AG04450 (cell line): ENCODE measurements at regions of chr14 and their contacts with region 1.

Region 1: DNA sequence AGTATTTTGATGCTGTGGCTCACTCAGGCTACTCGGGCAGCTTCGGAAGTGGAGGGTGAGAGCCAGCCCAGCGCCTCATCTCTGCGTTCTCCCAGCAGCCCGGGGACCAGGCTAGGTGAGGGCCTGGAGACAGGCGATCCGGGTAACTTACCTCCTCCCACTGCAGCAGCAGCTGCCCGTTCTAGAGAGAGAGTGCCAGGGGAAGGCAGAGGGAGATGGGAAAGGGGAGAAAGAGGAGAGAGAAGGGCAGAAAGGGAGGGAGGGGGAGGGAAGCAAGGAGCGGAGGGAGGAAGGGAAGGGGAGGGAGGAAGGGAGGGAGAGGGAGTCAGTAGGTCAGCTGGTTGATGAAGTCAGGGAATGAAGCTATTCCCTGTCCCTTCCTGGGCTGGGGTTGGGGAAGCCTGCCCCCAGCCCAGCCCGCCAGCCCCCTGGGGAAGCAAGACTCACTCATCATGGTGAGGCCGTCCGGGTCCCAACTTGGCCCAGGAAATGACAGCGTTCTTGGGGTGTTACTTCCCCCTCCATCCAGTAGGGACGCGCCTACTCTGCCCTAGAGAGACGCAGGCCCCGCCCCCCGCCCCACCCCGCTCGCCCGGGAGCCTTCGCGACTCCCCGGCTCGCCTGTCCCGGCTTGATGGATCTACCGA is at the start of gene IFI27L2:
- DNase-seq: peak; percentile 24
- H3K4me3 ChIP-seq: peak within 1 kb of the TSS; percentile 72
- H3K27ac ChIP-seq: peak within 1 kb of the TSS; percentile 54
- H3K27me3 ChIP-seq: peaks cover 3% of the 10 kb centered on the region
- CTCF ChIP-seq: peak; percentile 40
- polyA plus RNA-seq, gene IFI27L2: 81.9 and 122 TPM in 2 replicates

Region 2: GRCh38 chr14:94041551-94042346 is 87.5 kb before region 1 on chr14:
- CTCF ChIA-PET with region 1: interaction called, 183 read pairs
- POLR2A ChIA-PET with region 1: no interaction called
- DNase-seq: peak; percentile 46
- H3K4me3 ChIP-seq: no peak overlapping the region
- H3K27ac ChIP-seq: no peak overlapping the region
- H3K27me3 ChIP-seq: no peaks in the 10 kb centered on the region
- CTCF ChIP-seq: no peak

Region 3: DNA sequence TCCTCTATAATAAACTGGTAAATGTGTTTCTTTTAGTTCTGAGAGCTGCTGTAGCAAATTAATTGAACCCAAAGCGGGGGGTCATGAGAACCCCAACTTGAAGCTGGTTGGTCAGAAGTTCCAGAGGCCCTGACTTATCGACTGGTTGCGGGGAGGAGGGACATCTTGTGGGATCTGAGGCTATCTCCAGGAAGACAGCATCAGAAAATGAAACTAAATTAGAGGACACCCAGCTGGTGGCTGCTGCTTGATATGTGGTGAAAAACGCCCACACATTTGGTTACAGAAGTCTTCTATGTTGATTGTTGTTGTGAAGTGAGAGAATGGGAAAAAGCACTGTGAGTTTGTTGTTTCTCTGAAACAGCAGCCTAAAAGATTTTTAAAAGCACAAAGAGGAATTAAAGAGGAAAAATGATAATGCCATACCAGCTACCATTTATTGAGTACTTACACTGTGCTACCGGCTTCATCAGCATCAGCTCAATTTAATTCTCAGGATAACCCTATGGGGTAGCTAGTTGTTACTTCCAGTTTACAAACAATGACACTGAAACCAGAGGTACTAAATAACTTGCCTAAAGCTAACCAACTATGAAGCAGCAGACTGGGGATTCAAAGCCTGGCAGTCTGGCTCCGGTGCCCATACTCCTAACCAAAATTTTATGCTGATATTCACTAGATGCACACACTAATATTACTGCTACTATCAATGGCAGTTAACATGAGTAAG is 72.5 kb before region 1 on chr14:
- CTCF ChIA-PET with region 1: interaction called, 26 read pairs
- POLR2A ChIA-PET with region 1: interaction called, 8 read pairs
- DNase-seq: no peak
- H3K4me3 ChIP-seq: no peak overlapping the region
- H3K27ac ChIP-seq: no peak overlapping the region
- H3K27me3 ChIP-seq: no peaks in the 10 kb centered on the region
- CTCF ChIP-seq: no peak

Region 4: DNA sequence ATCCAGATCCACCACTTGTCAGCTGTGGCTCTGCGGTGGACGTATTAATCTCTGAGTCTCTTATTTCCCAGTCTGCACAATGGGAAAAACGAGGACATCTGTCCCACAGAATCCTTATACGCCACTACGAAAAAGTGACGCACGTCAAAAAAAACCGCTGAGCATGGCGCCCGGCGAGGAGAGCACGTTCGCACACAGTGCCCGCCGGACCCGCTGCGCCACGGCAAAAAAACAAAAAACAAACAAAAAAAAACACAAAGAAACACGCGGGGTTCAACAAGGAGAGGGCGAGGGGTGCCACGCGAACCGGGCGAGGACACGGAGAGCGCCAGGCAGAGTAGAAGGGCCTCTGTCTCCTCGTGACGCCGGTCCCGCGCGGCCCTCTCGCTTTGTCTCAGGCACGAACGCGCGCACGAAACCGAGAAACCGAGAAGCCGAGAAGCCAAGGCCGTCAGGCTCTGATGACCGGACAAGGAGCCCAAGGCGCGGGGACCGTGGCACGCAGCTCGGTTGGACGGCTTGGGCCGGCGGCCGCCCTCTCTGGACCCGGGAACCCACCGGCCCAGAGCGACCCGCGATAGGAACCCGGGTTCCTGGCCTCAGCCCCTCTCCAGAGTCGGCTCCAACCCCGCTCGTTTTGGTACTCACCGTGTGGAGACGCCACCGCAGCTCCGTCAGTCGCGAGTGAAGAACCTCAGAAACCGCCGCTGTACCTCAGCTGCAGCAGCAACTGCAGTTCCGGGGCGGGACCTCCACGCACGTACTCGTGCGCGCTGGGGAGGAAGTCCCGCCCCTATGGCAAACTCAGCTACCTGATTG is 48.6 kb before region 1 on chr14 and contains the start of gene DDX24:
- CTCF ChIA-PET with region 1: interaction called, 64 read pairs
- POLR2A ChIA-PET with region 1: interaction called, 6 read pairs
- DNase-seq: peak; percentile 86
- H3K4me3 ChIP-seq: peak within 1 kb of the TSS; percentile 93
- H3K27ac ChIP-seq: peak within 1 kb of the TSS; percentile 82
- H3K27me3 ChIP-seq: no peaks in the 10 kb centered on the region
- CTCF ChIP-seq: no peak
- polyA plus RNA-seq, gene DDX24: 145 and 159 TPM in 2 replicates

Region 5: DNA sequence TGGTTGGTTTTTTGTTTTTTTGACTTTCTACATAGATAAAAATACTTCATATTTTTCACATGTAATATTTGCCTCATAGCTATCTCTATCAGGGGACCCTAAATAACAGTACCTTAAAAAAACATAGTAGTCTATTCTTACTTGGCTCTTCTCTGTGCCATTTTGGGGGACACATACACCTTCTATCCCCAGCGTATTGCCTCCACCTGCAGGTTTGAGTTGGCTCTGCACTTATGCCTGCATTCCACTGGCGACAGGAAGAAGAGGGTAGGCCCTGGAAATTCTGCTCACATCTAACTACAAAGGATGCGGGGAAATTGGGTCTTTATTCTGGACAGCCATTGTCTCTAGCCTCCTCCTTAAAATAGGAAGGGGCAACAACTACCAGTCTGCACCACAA is 14.0 kb after region 1 on chr14:
- CTCF ChIA-PET with region 1: interaction called, 48 read pairs
- POLR2A ChIA-PET with region 1: no interaction called
- DNase-seq: no peak
- H3K4me3 ChIP-seq: no peak overlapping the region
- H3K27ac ChIP-seq: no peak overlapping the region
- H3K27me3 ChIP-seq: no peaks in the 10 kb centered on the region
- CTCF ChIP-seq: peak; percentile 44

Region 6: DNA sequence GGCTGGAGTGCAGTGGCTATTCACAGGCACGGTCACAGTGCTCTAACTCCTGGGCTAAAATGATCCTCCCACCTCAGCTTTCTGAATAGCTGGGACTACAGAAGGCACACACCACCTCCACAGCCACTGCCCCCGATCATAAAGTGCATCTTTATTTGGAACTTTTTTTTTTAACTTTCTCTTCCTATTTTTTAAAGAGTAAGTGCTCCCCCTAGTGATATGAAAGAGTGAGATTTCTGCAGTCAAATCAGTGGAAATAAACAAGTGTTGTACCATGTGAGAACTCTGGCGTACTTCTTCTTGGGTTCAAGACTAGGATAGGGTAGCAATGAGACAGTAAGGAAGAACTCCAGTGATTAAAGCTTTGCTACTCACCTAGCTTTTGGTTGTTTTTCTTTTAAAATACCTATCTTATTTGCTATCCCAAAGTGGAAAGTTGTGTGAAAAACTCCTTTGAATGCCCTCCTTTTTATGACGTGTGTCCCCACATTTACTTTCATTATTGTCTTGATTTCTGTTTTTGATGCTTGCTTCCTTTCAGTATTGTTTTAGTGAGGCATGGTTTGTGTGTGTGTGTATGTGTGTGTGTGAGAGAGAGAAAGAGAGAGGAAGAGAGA is 51.5 kb after region 1 on chr14:
- CTCF ChIA-PET with region 1: interaction called, 19 read pairs
- POLR2A ChIA-PET with region 1: no interaction called
- DNase-seq: no peak
- H3K4me3 ChIP-seq: no peak overlapping the region
- H3K27ac ChIP-seq: no peak overlapping the region
- H3K27me3 ChIP-seq: peaks cover 11% of the 10 kb centered on the region
- CTCF ChIP-seq: peak; percentile 70